Lower lobe of right lung (tissue), 2 donors: ENCODE measurements at regions of chr6 and their contacts with region 1.

Region 1: DNA sequence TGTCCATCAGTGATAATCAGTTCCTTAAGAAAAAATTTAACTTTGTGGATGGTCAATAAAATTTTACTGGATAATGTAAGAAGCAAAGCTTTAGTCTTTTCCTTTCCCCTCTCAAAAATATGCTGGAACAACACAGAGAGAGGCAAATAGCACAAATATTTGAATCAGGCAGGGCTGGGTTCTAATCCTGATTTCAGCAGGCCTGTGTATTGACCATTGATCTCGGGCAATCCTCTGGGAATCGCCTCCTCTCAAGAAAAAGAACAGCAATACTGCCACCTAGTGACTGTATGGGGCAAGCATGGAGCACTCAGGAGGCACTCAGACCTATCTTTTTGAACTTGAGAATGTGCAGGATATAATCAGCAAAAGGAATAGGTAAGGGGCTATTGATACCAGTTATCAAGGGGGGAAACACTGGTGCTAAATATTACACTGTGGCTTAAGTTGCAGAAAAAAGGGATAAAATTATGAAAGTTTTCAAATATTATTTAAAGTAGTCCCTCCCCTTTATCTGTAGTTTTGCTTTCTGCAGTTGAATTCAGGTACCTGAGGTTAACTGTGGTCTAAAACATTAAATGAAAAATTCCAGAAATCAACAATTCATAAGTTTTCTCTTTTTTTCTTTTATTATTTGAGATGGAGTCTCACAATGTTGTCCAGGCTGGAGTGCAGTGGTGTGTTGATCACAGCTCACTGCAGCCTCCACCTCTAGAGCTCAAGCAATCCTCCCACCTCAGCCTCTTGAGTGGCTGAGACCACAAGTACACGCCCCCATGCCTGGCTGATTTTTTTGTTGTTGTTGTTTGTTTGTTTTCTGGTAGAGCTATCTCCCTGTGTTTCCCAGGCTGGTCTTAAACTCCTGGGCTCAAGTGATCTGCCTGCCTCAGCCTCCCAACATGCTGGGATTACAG is 91.8 kb upstream of the NHSL1 start:
- DNase-seq: no peak
- ATAC-seq: peak; percentile 61 to 73
- H3K4me3 ChIP-seq: no peak overlapping the region
- H3K27ac ChIP-seq: no peak overlapping the region
- H3K4me1 ChIP-seq: peaks cover 18% of the 10 kb centered on the region
- H3K27me3 ChIP-seq: no peaks in the 10 kb centered on the region
- CTCF ChIP-seq: peak; percentile 85

Region 2: GRCh38 chr6:138722425-138723371 is 131.6 kb after region 1 on chr6:
- intact Hi-C with region 1: no loop called
- DNase-seq: no peak
- ATAC-seq: peak in 1 of 2 donors; percentile 49
- H3K4me3 ChIP-seq: no peak overlapping the region
- H3K27ac ChIP-seq: no peak overlapping the region
- H3K4me1 ChIP-seq: peaks cover 15% of the 10 kb centered on the region
- H3K27me3 ChIP-seq: no peaks in the 10 kb centered on the region
- CTCF ChIP-seq: no peak

Region 3: GRCh38 chr6:138765896-138766655 is 175.0 kb after region 1 on chr6:
- intact Hi-C with region 1: loop called (anchors 5 kb)
- DNase-seq: no peak
- ATAC-seq: no peak
- H3K4me3 ChIP-seq: no peak overlapping the region
- H3K27ac ChIP-seq: no peak overlapping the region
- H3K4me1 ChIP-seq: no peaks in the 10 kb centered on the region
- H3K27me3 ChIP-seq: no peaks in the 10 kb centered on the region
- CTCF ChIP-seq: peak; percentile 66